Left ventricle myocardium inferior (tissue), 1 donor: ENCODE measurements at regions of chr1 and their contacts with region 1.

Region 1: DNA sequence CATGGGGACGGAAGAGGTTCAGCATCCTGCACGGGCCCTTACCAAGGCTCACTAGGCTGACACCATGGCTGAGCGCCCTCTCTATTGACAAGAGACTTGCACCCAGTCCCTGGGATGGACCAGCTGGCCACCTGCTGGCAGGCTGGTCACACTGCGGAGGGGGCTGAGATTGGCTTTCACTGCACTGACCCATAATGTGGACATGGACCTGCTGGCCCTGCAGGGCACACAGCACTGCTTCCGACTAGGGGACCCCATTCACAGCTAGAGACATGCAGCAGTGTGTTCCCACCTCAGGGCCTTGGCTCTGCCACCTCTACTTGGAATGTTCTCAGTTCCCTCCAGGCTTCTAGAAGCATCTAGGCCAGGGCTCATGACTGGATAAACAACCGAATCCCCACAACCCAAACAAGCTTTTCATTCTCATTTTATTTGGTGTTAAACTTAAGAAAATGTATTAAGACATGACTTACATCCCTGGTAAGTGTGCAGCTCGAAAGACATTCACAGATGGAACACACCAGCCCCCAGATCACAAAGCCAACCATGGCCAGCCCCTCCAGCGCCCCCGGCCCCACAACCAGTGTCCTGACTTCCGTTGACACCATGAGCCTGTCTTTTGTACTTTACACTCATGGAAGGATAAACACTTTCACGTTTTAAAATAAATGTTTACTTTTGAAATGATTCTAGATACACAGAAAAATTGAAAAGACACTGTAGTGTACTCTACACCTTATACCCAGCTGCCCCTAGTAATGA is 9.3 kb upstream of the SRARP start:
- DNase-seq: peak; percentile 63
- H3K4me3 ChIP-seq: no peak overlapping the region
- H3K27ac ChIP-seq: no peak overlapping the region
- H3K4me1 ChIP-seq: no peaks in the 10 kb centered on the region
- H3K27me3 ChIP-seq: no peaks in the 10 kb centered on the region
- CTCF ChIP-seq: peak; percentile 91

Region 2: DNA sequence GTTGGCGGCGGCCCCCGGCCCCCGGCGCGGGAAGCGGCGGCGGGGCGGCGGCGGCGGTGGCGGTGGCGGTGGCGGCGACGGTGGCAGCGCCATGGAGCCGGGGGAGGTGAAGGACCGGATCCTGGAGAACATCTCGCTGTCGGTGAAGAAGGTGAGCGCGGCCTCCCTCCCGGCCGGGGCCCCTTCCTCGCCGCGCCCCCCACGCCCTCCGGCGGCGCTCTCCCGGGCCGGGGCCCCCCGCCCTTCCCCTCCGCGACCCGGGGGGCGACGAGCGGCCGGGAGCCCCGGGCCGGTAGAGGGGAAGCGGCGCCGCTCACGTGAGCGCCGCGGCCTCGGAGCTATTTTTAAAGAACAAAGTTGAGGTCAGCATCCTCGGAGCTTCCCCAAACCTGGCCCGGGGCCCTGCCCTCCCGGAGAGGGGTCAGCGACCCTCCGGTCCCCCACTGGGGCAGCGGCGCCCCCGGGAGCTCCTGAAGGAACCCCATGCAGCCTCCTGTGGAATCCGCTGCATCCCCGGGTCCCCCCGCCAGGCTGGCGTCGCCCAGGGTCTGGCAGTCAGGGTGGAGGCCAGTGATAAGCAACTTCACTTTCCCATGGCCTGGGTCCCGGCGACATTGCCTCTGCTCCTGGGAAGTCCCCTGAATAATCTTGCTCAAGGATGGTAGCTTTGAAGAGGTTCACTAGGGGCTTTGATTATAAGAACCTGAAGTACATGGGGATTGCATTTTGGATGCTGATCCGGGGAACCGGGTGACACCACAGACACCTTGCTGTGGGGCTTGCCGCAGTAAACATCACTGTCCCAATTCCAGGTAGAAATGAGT is 310.1 kb before region 1 on chr1:
- intact Hi-C with region 1: no loop called
- DNase-seq: peak; percentile 42
- H3K4me3 ChIP-seq: peak overlapping the region; percentile 88
- H3K27ac ChIP-seq: peak overlapping the region; percentile 94
- H3K4me1 ChIP-seq: peaks cover 61% of the 10 kb centered on the region
- H3K27me3 ChIP-seq: no peaks in the 10 kb centered on the region
- CTCF ChIP-seq: peak; percentile 35

Region 3: DNA sequence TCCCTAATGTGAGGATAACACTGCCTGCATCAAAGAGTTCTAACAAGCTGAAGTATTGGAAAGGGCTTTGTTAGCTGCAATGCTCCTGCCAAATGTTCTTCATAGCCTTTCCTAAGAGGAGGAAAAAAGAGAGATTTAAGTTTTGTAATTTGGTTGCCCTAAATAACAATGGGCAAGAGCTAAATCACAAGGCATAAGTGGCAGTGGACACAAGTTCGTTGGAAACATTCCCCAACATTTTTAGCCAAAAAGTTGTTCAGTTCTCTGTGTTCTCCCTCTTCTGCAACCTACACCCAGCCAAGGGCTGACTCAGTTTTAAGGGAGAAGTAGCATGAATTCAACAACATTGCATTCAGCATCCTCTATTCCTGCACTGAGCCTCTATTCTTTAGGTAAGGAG is 184.7 kb before region 1 on chr1:
- intact Hi-C with region 1: loop called (anchors 5 kb)
- DNase-seq: no peak
- H3K4me3 ChIP-seq: no peak overlapping the region
- H3K27ac ChIP-seq: no peak overlapping the region
- H3K4me1 ChIP-seq: no peaks in the 10 kb centered on the region
- H3K27me3 ChIP-seq: no peaks in the 10 kb centered on the region
- CTCF ChIP-seq: no peak

Region 4: DNA sequence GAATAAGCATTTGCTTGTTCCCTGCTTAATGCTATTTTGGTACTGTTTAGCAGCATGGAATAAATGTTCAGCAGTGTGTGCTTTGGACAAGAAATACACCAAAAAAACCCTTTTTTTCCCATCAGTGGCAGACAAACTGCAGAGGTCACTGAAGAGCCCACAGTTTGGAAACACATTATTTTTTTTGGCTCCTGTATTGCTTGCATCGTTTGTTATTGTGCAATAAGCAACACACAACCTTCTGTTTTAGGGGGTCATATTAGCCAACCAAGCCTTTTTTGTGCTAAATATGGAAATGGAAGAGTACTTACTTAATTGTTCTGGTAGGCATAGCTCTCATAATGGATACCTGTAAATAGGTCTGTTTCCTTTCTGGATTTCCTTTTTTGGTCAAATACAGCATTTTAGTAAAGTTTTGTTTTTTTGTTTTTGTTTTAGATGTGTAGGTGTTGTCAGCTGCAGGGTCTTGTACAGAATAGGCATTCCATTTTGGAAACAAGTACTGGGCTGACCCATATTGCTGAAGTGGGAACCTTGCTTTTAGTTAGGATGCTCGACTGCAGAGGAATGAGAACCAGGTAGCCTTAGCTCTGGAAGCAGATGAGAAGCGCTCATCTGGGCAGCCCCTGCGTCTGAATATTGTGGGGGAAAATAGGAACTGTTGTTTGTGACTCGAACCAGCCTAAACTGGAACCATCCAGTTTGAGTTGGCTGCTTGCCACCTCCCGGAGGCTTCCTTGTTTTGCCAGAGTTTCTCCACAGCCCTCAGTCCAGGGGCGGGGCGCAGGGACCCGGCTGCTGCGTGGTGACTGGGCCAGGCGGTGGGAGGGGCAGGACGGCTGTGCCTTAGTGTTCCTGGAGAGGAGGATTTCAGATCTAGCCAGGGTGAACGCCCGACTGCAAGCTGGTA is 108.8 kb before region 1 on chr1:
- intact Hi-C with region 1: no loop called
- DNase-seq: peak; percentile 98
- H3K4me3 ChIP-seq: peak overlapping the region; percentile 61
- H3K27ac ChIP-seq: peak overlapping the region; percentile 94
- H3K4me1 ChIP-seq: peaks cover 71% of the 10 kb centered on the region
- H3K27me3 ChIP-seq: no peaks in the 10 kb centered on the region
- CTCF ChIP-seq: peak; percentile 32